Activated CD4-positive, alpha-beta T cell treated with anti-CD3 and anti-CD28 coated beads, Interleukin-2, amount 10 ng/mL, durations not matched to agents 24 days and 14 days (primary cell): ENCODE measurements at regions of chr9 and their contacts with region 1.

Region 1: DNA sequence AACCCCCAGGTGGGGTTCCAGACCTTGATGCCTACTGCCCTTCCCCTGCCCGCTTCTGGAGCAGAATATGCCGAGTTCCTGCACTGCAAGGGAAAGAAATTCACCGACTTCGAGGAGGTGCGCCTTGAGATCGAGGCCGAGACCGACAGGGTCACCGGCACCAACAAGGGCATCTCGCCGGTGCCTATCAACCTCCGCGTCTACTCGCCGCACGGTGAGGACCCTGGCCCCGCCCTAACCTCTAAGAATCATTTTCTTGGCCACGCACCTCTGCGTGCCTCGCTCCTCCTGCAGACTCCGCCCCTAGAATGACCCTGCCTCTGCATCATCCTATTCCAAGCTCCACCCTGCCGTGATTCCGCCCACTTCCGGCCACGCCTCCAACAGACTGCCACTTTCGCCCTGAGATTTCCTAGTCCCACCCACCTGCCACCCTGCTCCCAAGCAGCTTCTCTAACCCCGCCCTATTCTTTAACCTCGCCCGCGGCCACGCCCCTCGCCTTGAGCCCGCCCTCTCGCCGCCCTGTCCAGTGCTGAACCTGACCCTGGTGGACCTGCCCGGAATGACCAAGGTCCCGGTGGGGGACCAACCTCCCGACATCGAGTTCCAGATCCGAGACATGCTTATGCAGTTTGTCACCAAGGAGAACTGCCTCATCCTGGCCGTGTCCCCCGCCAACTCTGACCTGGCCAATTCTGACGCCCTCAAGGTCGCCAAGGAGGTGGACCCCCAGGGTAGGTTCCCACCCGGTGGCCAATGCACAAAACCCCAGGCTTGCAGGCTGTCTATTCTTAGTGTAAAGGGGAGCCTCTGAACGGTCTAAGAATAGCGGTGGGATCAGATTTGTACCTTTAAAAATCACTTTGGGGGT is 15.6 kb downstream of the DNM1 start:
- DNase-seq: peak; percentile 99
- H3K4me3 Mint-ChIP-seq: peak overlapping the region; percentile 82
- H3K27ac Mint-ChIP-seq: peak overlapping the region; percentile 78
- H3K4me1 Mint-ChIP-seq: peaks cover 14% of the 10 kb centered on the region
- H3K27me3 Mint-ChIP-seq: peaks cover 6% of the 10 kb centered on the region

Region 2: DNA sequence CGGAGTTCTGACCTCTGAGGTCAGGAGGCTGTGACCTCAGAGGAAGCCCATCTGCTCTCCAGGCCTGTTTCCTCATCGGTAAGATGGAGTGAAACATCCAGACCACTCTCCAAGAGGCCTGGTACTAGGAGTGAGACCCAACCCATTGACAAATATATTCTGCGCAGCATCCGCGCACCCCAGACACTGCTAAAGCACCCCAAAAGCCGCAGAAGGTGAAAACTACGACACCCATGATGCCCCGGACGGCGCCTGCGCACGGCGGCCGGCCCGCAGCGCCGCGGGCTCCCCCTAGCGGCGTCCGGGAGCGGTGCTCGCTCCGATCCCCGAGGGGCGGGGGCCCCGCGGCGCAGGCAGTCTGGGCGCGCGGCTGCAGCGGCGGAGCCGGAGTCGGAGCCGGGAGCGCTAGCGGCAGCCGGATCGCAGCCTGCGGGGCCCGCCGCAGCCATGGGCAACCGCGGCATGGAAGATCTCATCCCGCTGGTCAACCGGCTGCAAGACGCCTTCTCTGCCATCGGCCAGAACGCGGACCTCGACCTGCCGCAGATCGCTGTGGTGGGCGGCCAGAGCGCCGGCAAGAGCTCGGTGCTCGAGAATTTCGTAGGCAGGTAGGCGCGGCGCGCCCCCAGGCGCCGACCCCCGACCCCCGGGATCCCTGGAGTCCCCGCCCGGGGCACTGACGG is 15.6 kb before region 1 on chr9 and contains the start of gene DNM1:
- intact Hi-C with region 1: loop called (anchors 1 kb)
- DNase-seq: peak; percentile 95
- H3K4me3 Mint-ChIP-seq: peak within 1 kb of the TSS; percentile 72
- H3K27ac Mint-ChIP-seq: peak within 1 kb of the TSS; percentile 64
- H3K4me1 Mint-ChIP-seq: peaks cover 16% of the 10 kb centered on the region
- H3K27me3 Mint-ChIP-seq: peaks cover 32% of the 10 kb centered on the region
- total RNA-seq, gene DNM1: 0.95 and 1.5 TPM in 2 replicates

Region 3: DNA sequence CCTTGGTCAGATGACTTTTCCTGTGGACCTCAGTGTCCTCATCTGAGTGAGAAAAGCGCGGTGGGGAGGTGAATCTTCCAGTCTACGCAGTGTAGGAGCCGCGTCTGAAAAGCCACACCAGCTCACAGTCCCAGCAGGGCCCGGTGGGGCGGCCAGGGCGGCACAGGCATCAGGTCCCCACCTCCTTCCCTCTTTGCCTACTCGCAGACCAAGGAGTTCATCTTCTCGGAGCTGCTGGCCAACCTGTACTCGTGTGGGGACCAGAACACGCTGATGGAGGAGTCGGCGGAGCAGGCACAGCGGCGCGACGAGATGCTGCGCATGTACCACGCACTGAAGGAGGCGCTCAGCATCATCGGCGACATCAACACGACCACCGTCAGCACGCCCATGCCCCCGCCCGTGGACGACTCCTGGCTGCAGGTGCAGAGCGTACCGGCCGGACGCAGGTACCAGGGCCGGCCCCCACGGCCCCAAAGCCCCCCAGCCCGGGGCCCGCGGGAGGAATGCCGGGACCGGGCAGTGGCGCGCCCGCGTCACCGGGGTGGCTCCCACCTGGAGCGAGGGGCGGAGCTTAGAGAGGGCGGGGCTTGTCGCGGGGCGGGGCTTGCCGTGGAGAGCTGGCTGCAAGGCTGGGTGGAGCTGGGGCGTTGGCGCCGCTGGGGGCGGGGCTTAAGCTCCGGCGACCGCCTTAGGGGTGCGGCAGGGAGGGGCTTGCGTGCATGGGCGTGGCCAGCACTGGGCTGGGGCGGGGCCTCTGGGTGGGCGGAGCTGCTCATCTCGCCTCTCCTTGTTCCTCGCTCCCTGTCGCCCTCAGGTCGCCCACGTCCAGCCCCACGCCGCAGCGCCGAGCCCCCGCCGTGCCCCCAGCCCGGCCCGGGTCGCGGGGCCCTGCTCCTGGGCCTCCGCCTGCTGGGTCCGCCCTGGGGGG is 31.4 kb after region 1 on chr9:
- intact Hi-C with region 1: loop called (anchors 1 kb)
- DNase-seq: peak; percentile 99
- H3K4me3 Mint-ChIP-seq: peak overlapping the region; percentile 85
- H3K27ac Mint-ChIP-seq: no peak overlapping the region
- H3K4me1 Mint-ChIP-seq: peaks cover 9% of the 10 kb centered on the region
- H3K27me3 Mint-ChIP-seq: peaks cover 32% of the 10 kb centered on the region

Region 4: GRCh38 chr9:128275996-128276573 is 57.3 kb after region 1 on chr9 and contains the starts of genes GOLGA2 and SWI5:
- intact Hi-C with region 1: loop called (anchors 1 kb)
- DNase-seq: peak; percentile 100
- H3K4me3 Mint-ChIP-seq: peak within 1 kb of the TSS; percentile 93
- H3K27ac Mint-ChIP-seq: peak within 1 kb of the TSS; percentile 95
- H3K4me1 Mint-ChIP-seq: peaks cover 45% of the 10 kb centered on the region
- H3K27me3 Mint-ChIP-seq: peaks cover 3% of the 10 kb centered on the region
- total RNA-seq, gene GOLGA2: 44.1 and 50.4 TPM in 2 replicates
- total RNA-seq, gene SWI5: 13.6 and 14.3 TPM in 2 replicates